H1 (cell line): ENCODE measurements at regions of chr2 and their contacts with region 1.

Region 1: GRCh38 chr2:196076778-196077568 is 8.3 kb upstream of the DNAH7 start:
- DNase-seq: no peak
- H3K4me3 ChIP-seq: no peak overlapping the region
- H3K27ac ChIP-seq: no peak overlapping the region
- H3K4me1 ChIP-seq: no peaks in the 10 kb centered on the region; a peak in 1 of 7 replicates
- H3K27me3 ChIP-seq: no peaks in the 10 kb centered on the region
- CTCF ChIP-seq: no peak
- EP300 ChIP-seq: no peak
- POLR2A ChIP-seq: no peak
- RAD21 ChIP-seq: no peak

Region 2: DNA sequence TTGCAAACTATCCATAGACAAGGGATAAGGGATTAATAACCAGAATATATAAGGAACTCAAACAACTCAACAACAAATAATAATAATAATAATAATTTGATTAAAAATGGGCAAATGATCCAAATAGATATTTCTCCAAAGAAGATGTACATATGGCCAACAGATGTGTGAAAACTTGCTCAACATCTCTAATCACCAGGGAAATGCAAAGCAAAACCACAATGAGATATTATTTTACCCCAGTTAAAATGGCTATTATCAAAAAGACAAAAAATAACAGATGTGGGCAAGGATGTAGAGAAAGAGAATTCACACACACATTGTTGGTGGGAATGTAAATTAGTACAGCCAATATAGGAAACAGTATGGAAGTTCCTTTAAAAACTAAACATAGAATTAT is 35.2 kb before region 1 on chr2:
- CTCF ChIA-PET with region 1: no interaction called
- POLR2A ChIA-PET with region 1: no interaction called
- DNase-seq: no peak
- H3K4me3 ChIP-seq: no peak overlapping the region
- H3K27ac ChIP-seq: no peak overlapping the region
- H3K4me1 ChIP-seq: no peaks in the 10 kb centered on the region
- H3K27me3 ChIP-seq: no peaks in the 10 kb centered on the region
- CTCF ChIP-seq: no peak
- EP300 ChIP-seq: no peak
- POLR2A ChIP-seq: no peak
- RAD21 ChIP-seq: no peak

Region 3: DNA sequence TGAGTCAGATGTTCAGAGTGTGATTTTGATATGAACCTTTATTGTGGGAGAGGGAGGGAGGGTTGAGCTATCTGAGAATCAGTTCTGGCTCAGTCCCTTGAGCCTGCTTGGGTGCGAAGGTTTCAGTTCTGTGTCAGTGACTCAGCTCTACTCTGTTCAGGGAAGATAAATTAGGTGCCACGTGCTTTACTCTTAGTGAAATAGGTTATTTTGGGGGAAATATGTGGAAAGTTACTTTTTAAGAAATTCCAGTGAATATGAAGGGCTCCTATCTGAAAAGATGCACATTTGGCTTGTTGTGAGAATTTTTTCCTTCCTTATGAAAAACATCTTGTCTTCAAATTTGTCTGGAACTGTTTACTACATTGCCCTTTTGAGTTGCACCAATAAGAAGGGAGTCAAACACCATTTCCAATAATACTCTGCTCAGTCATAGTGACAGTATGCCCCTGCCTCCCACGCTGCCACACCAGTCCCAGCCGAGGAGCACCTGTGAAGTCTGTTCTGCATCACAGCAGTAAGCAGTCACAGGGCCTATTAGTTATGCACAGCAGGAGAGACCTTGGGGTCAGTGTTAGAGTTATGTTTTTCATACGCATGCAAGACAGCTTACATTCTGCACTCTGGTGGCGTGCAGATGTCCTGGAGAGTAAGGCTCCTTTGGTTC is 24.5 kb after region 1 on chr2:
- CTCF ChIA-PET with region 1: interaction called, 25 read pairs
- POLR2A ChIA-PET with region 1: no interaction called
- DNase-seq: no peak
- H3K4me3 ChIP-seq: no peak overlapping the region
- H3K27ac ChIP-seq: no peak overlapping the region
- H3K4me1 ChIP-seq: peaks cover 4 to 10% (median 5%) of the 10 kb centered on the region in 4 experiments; a peak in 5 of 7 replicates
- H3K27me3 ChIP-seq: no peaks in the 10 kb centered on the region
- CTCF ChIP-seq: no peak
- EP300 ChIP-seq: no peak
- POLR2A ChIP-seq: no peak
- RAD21 ChIP-seq: no peak

Region 4: DNA sequence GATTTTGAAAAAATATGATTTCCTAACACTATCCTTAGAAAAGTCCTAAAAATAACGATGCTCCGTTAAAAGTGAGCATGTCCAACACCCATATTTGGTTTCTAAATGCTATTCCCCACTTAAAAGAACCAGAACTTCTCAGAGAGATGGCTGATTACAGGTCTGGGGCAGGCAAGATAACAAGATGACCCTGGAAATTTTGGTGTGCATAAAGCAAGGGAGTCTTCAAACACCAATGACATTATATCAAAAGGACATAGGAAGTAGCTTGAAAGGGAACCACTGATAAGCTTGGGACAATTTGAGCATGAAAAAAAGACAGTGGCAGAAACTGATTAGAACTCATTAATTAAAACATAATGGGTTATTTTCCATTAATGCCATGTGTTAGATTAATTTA is 76.5 kb after region 1 on chr2:
- CTCF ChIA-PET with region 1: interaction called, 14 read pairs
- POLR2A ChIA-PET with region 1: no interaction called
- DNase-seq: no peak
- H3K4me3 ChIP-seq: no peak overlapping the region
- H3K27ac ChIP-seq: no peak overlapping the region
- H3K4me1 ChIP-seq: no peaks in the 10 kb centered on the region
- H3K27me3 ChIP-seq: no peaks in the 10 kb centered on the region
- CTCF ChIP-seq: no peak
- EP300 ChIP-seq: no peak
- POLR2A ChIP-seq: no peak
- RAD21 ChIP-seq: no peak

Region 5: GRCh38 chr2:196277002-196277401 is 200.0 kb after region 1 on chr2:
- CTCF ChIA-PET with region 1: interaction called, 84 read pairs
- POLR2A ChIA-PET with region 1: no interaction called
- DNase-seq: no peak
- H3K4me3 ChIP-seq: no peak overlapping the region
- H3K27ac ChIP-seq: no peak overlapping the region
- H3K4me1 ChIP-seq: no peaks in the 10 kb centered on the region
- H3K27me3 ChIP-seq: no peaks in the 10 kb centered on the region
- CTCF ChIP-seq: peak in 2 of 3 experiments; percentile 50 to 55; a peak in 2 of 4 replicates
- EP300 ChIP-seq: no peak
- POLR2A ChIP-seq: no peak
- RAD21 ChIP-seq: peak; percentile 62 to 65

Region 6: DNA sequence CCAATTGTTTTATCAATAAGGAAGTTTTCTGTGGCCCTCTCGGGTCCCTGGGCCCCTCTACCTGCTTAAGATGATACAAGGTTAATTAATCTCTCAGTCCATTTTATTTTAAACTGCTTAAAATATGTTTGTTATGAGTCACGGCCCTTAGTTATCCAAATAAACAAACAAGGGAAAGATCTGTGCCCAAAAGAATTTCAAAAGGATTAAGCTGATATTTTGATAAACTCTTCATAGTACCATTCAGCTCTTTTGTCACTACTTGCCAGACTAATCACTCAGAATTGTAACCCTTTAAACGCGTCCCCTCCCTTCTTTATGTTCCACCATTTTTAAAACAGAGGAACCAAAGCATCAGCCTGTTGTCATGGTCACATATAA is 239.1 kb after region 1 on chr2:
- CTCF ChIA-PET with region 1: interaction called, 13 read pairs
- POLR2A ChIA-PET with region 1: no interaction called
- DNase-seq: no peak
- H3K4me3 ChIP-seq: no peak overlapping the region
- H3K27ac ChIP-seq: no peak overlapping the region
- H3K4me1 ChIP-seq: no peaks in the 10 kb centered on the region
- H3K27me3 ChIP-seq: no peaks in the 10 kb centered on the region
- CTCF ChIP-seq: no peak
- EP300 ChIP-seq: no peak
- POLR2A ChIP-seq: no peak
- RAD21 ChIP-seq: no peak